ENCODE measurements at regions of chr6 and their contacts with region 1.

Region 1: DNA sequence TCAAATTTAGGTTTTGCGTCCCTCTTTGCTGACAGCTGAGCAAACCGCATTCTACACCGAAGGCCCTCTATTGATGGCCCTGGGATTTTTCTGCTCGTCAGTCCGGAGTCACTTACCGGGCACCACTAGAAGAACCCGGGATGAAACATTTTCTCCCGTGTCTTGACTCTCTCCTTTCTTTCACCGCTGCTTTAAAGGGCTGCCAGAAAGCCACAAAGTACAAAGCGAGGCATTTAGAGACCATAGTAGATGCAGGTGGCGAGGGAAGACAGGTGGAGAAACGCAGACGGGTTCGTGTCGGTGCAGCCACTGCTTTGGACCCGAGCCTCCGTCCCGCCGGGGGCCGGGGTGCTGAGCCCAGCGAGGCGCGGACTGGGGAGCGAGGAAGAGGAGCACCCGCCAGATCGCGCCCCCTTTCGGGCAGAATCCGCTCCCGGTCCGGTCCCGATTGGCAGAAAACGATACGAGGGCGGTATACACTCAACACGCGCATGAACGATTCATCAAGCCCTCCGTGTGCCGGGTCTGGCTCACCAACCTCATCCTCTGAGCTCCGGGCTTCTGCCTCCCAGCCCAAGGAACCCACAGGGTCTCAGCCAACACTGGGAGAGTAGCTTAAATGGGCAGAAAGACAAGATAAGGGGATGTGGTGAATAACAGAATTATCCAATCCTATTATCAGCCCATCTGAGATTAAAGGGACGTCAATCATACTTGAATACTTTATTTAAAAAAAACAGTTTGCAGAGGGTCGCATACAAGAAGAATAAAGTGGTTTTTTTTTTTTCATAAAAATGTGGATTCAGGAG is 84.9 kb downstream of the TRIM27 start:
- DNase-seq: no peak
- ATAC-seq: peak; percentile 92
- H3K4me3 ChIP-seq: peak overlapping the region; percentile 67 to 90
- H3K27ac ChIP-seq: peak overlapping the region; percentile 72
- H3K4me1 ChIP-seq: peaks cover 3% of the 10 kb centered on the region
- H3K27me3 ChIP-seq: peaks cover 10% of the 10 kb centered on the region; the same call in 1 of the 2 replicates
- CTCF ChIP-seq: peak; percentile 91

Region 2: GRCh38 chr6:28597217-28598005 is 241.4 kb before region 1 on chr6:
- CTCF ChIA-PET with region 1: no interaction called
- POLR2A ChIA-PET with region 1: no interaction called
- in situ Hi-C with region 1: no loop called
- intact Hi-C with region 1: no loop called
- DNase-seq: peak; percentile 96
- ATAC-seq: peak; percentile 98
- H3K4me3 ChIP-seq: peak overlapping the region; percentile 71 to 95
- H3K27ac ChIP-seq: peak overlapping the region; percentile 65
- H3K4me1 ChIP-seq: no peaks in the 10 kb centered on the region
- H3K27me3 ChIP-seq: peaks cover 2% of the 10 kb centered on the region; the same call in 1 of the 2 replicates
- CTCF ChIP-seq: no peak

Region 3: DNA sequence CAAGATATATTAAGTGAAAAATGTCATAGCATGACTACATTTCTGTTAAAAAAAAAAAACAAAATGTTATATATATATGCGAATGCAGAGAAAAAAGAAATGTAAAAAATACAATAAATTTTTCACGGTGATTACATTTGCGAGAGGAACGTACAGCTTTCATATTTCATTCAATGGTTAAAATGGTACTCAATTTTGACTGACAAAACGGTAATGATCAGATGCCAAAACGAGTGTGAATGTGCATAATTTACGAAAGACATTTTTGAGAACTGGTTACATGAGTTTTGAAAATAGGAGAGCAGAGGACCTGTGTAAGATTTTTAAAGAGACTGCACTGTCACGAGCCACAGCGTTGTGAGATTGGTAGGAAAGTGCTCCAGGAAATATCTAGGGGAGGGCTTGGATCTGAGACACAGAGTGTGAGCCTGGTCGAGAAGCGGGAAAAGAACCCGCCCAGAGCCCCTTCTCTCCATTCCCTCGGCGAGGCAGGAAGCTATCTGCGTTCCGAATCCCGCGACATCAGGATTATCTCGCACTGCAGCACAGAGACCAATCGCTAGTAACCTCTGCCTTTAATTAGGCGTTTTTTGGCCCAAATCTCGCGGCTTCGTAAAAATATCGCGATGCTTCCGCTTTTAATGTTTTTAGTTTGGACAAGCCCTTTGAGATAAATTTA is 56.4 kb after region 1 on chr6:
- CTCF ChIA-PET with region 1: interaction called, 5 read pairs
- POLR2A ChIA-PET with region 1: no interaction called
- in situ Hi-C with region 1: no loop called
- intact Hi-C with region 1: loop called (anchors 1 kb)
- DNase-seq: peak; percentile 95
- ATAC-seq: peak; percentile 85
- H3K4me3 ChIP-seq: peak overlapping the region; percentile 89 to 92
- H3K27ac ChIP-seq: peak overlapping the region; percentile 95
- H3K4me1 ChIP-seq: peaks cover 5% of the 10 kb centered on the region
- H3K27me3 ChIP-seq: no peaks in the 10 kb centered on the region
- CTCF ChIP-seq: no peak

Region 4: GRCh38 chr6:28940858-28941680 is 102.2 kb after region 1 on chr6:
- CTCF ChIA-PET with region 1: no interaction called
- POLR2A ChIA-PET with region 1: no interaction called
- in situ Hi-C with region 1: no loop called
- intact Hi-C with region 1: loop called (anchors 5 kb)
- DNase-seq: peak; percentile 95
- ATAC-seq: peak; percentile 86
- H3K4me3 ChIP-seq: peak overlapping the region; percentile 99 to 100
- H3K27ac ChIP-seq: peak overlapping the region; percentile 84
- H3K4me1 ChIP-seq: peaks cover 17% of the 10 kb centered on the region
- H3K27me3 ChIP-seq: no peaks in the 10 kb centered on the region
- CTCF ChIP-seq: no peak

Region 5: DNA sequence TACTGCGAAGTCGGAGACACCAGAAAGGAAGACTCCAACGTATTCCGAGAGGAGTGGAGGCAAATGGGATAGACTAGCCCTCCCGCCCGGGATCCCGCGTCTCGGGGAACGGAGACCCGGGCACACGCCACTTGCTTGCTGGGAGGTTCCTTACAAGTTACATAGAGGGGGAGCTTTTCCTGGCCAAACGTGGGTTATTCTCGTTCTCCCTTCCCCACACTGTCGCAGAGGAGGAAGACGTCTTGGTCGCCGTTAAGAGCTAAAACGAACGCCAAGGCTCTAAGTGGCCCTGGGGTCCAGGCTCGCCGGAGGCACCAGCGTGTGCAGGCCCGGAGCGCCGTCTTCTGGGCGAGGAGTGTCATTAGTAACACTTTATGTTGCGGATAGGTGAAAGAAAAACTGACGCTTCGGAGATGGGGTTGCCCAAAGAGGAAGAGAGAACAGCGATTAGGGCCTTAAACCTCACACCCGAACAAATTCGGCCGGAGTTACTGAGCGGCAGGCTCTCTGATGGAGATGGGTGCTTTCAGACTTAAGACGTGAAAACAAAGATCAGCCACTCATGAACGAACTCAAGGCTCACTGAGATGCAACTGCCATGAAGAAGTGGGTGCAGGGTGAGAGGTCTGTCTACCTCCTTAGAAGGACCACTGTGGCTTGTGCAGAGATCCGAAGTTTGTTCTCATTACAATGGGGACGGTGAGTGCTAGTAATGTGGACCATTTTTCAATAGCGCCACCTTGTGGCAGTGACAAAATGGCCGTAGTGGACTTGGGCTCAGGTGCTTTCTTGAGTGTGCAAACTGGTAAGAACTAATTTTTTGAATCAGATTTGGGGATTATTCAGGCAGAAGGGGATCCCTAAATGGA is 178.0 kb after region 1 on chr6:
- CTCF ChIA-PET with region 1: interaction called, 7 read pairs
- POLR2A ChIA-PET with region 1: no interaction called
- in situ Hi-C with region 1: no loop called
- intact Hi-C with region 1: loop called (anchors 2 kb)
- DNase-seq: peak; percentile 76
- ATAC-seq: peak; percentile 96
- H3K4me3 ChIP-seq: peak overlapping the region; percentile 66 to 99
- H3K27ac ChIP-seq: peak overlapping the region; percentile 81
- H3K4me1 ChIP-seq: no peaks in the 10 kb centered on the region
- H3K27me3 ChIP-seq: no peaks in the 10 kb centered on the region
- CTCF ChIP-seq: peak; percentile 93

Measured in Panc1 (cell line).